MCF 10A (cell line): ENCODE measurements at regions of chr16 and their contacts with region 1.

Region 1: DNA sequence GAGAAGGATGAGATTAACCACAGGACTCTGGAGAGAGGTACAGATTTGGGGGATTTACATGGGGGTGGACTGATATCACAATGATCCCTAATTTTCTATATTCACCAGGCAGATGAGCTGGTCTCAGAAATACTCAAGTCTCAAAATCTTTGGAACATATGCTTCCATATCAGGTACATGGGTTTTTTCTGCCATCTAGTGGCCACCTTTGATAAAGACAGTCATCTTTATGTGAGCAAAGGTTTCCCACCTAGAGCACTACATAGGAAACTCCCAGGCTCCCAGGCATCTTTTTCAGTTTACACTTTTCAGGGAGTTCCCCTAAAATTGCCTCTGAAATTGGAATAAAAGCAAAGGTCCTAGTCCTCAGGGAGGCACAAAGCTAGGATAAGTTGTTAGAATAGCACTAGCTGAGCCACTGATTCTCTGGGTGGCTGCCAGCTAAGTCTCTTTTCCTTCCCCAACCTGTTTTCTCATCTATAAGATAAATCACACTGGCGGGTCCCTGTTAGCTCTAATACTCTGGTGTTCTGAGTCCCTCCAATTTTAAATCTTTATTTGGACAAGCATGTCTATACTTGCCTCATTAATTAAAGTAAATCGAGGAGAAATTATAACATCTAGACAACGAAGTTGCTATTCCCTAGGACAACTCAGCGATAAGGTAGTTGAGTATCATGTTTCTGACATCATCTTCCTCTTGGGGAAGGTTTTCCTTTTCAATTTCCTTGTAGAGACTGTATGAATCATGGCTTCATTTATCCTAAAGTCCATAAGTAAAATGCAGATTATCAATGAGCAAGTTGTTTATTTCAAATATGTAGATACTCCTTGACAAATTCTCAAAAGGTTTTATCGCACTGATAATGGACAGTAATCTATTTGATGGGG is 19.0 kb upstream of the MON1B start:
- DNase-seq: peak; percentile 77
- H3K4me3 Mint-ChIP-seq: no peak overlapping the region
- H3K27ac Mint-ChIP-seq: no peak overlapping the region
- H3K4me1 Mint-ChIP-seq: no peaks in the 10 kb centered on the region
- H3K27me3 Mint-ChIP-seq: no peaks in the 10 kb centered on the region
- CTCF ChIP-seq: peak; percentile 77

Region 2: GRCh38 chr16:75789237-75789636 is 1382.8 kb before region 1 on chr16:
- CTCF ChIA-PET with region 1: interaction called, 25 read pairs
- POLR2A ChIA-PET with region 1: no interaction called
- intact Hi-C with region 1: loop called (anchors 1 kb)
- DNase-seq: peak; percentile 69
- H3K4me3 Mint-ChIP-seq: no peak overlapping the region
- H3K27ac Mint-ChIP-seq: no peak overlapping the region
- H3K4me1 Mint-ChIP-seq: no peaks in the 10 kb centered on the region
- H3K27me3 Mint-ChIP-seq: no peaks in the 10 kb centered on the region
- CTCF ChIP-seq: peak; percentile 67

Region 3: GRCh38 chr16:76278980-76279379 is 893.0 kb before region 1 on chr16:
- CTCF ChIA-PET with region 1: interaction called, 86 read pairs
- POLR2A ChIA-PET with region 1: interaction called, 4 read pairs
- intact Hi-C with region 1: loop called (anchors 1 kb)
- DNase-seq: peak; percentile 53
- H3K4me3 Mint-ChIP-seq: no peak overlapping the region
- H3K27ac Mint-ChIP-seq: no peak overlapping the region
- H3K4me1 Mint-ChIP-seq: peaks cover 9% of the 10 kb centered on the region
- H3K27me3 Mint-ChIP-seq: peaks cover 15% of the 10 kb centered on the region
- CTCF ChIP-seq: peak; percentile 47

Region 4: GRCh38 chr16:76882077-76882476 is 289.9 kb before region 1 on chr16:
- CTCF ChIA-PET with region 1: interaction called, 9 read pairs
- POLR2A ChIA-PET with region 1: no interaction called
- intact Hi-C with region 1: loop called (anchors 2 kb)
- DNase-seq: peak; percentile 56
- H3K4me3 Mint-ChIP-seq: no peak overlapping the region
- H3K27ac Mint-ChIP-seq: no peak overlapping the region
- H3K4me1 Mint-ChIP-seq: no peaks in the 10 kb centered on the region
- H3K27me3 Mint-ChIP-seq: no peaks in the 10 kb centered on the region
- CTCF ChIP-seq: peak; percentile 44

Region 5: DNA sequence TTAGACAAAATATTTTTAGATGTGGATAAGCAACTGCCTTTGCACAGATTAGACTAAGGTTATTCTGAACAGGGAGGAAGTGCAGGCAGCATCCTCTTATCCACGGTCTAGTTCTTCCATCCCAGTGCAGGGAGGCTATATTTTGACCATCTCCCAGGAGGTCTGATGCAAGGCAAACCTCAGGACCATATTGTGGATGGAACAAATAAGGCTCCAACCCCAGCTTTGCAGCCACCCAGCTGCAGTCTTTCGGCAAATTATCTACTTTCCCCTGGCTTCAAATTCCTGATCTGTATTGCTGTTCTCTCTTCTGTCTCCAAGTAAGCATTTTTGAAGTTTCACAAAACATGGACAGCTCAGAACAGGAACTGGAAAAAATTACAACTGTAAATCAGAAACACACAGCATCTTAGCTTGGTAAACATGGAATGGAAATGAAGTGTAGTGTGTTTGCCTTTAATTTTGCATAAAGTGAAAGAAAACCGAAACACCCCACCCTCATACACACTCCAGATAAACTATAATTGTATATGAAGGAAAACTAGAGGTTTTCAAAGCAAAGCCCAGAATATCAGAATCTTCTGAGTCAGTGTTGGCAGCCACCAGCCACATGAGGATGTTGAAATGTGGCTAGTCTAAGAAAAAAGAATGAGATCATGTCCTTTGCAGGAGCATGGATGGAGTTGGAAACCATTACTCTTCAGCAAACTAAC is 14.5 kb before region 1 on chr16:
- CTCF ChIA-PET with region 1: interaction called, 14 read pairs
- POLR2A ChIA-PET with region 1: no interaction called
- intact Hi-C with region 1: no loop called
- DNase-seq: no peak
- H3K4me3 Mint-ChIP-seq: no peak overlapping the region
- H3K27ac Mint-ChIP-seq: no peak overlapping the region
- H3K4me1 Mint-ChIP-seq: peaks cover 5% of the 10 kb centered on the region
- H3K27me3 Mint-ChIP-seq: no peaks in the 10 kb centered on the region
- CTCF ChIP-seq: no peak